ENCODE measurements at regions of chr5 and their contacts with region 1.

Region 1: DNA sequence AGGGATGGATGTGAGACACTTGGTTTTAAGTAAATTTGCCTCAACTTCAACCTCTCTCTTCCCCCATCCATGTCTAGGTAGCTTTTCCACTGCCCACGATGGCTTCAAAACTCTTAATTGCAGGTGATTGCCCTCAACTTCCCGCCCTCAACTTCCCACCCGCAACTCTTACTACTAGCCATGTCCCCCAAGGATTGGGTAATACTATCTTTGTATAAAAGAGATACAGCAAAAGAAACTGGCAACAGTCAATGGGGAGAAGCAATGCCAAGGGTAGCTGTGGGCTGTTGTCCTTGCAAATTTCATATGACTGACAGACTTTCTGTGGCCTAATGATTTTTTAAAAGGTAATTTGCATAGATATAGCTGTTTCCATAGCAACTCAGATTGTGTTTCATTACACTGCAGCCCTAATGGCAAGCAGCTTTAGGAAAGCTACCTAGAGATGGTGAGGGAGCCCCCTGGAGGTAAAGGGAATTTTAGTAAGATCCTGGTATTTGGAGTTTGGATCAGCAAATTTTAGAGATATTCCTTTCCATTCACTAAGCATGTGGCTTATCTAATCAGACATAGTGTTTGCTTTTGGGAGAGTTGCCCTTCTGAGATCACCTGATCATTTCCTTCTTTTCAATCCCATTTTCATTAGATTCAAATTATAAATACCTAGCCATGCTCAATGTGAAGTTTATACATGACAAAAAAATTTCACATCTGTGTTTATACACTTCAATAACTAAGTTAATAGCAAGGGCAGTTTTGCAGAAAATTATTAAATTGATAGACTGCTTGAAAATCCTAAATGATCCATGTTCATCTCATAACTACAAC is 421.6 kb upstream of the DAP start:
- DNase-seq: peak; percentile 20 to 31
- ATAC-seq: peak; percentile 69 to 80; a peak in 5 of 6 replicates
- H3K4me3 ChIP-seq: no peak overlapping the region
- H3K27ac ChIP-seq: no peak overlapping the region
- H3K4me1 ChIP-seq: no peaks in the 10 kb centered on the region
- CTCF ChIP-seq: peak; percentile 59
- EP300 ChIP-seq: no peak
- POLR2A ChIP-seq: no peak
- RAD21 ChIP-seq: peak; percentile 49 to 50; a peak in 4 of 5 replicates

Region 2: DNA sequence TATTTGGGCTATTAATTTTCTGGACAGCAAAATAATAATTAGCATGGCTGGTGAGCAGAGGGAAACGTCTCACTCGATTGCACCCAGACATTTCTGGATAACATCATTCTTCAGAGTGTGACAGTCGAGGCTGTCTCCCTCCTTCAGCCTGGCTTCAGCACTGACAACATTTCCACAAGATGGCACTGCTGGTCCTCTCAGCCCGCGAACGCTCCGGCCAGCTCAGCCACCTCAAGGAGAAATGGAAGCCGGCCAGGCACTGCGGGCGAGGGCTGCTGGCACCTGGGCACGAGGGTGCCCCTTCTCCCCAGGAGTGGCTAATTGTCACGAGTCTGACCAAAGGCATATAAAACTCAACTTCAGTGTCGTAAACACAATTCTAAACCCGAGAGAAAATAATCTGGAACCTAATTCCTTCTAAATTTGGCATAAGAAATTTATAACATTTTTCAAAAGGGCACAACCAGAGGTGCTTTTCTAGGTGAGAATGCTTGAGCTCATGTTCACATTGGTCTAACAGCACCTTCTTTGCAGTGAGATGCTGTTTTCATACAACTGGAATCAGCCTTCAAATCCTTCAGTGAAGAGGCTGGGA is 487.5 kb before region 1 on chr5:
- CTCF ChIA-PET with region 1: interaction called, 10 read pairs
- POLR2A ChIA-PET with region 1: no interaction called
- DNase-seq: peak; percentile 75 to 83
- ATAC-seq: peak; percentile 95 to 97
- H3K4me3 ChIP-seq: no peak overlapping the region
- H3K27ac ChIP-seq: no peak overlapping the region
- H3K4me1 ChIP-seq: peaks cover 15% of the 10 kb centered on the region; the same call in 2 of the 3 replicates
- CTCF ChIP-seq: peak; percentile 90
- EP300 ChIP-seq: no peak
- POLR2A ChIP-seq: no peak
- RAD21 ChIP-seq: peak; percentile 95 to 96

Region 3: GRCh38 chr5:11027660-11028059 is 155.0 kb before region 1 on chr5:
- CTCF ChIA-PET with region 1: no interaction called
- POLR2A ChIA-PET with region 1: no interaction called
- DNase-seq: no peak
- ATAC-seq: no peak
- H3K4me3 ChIP-seq: no peak overlapping the region
- H3K27ac ChIP-seq: no peak overlapping the region
- H3K4me1 ChIP-seq: no peaks in the 10 kb centered on the region
- CTCF ChIP-seq: no peak
- EP300 ChIP-seq: no peak
- POLR2A ChIP-seq: no peak
- RAD21 ChIP-seq: no peak

Measured in A549 (cell line).